ENCODE measurements at regions of chr2 and their contacts with region 1.

Region 1: DNA sequence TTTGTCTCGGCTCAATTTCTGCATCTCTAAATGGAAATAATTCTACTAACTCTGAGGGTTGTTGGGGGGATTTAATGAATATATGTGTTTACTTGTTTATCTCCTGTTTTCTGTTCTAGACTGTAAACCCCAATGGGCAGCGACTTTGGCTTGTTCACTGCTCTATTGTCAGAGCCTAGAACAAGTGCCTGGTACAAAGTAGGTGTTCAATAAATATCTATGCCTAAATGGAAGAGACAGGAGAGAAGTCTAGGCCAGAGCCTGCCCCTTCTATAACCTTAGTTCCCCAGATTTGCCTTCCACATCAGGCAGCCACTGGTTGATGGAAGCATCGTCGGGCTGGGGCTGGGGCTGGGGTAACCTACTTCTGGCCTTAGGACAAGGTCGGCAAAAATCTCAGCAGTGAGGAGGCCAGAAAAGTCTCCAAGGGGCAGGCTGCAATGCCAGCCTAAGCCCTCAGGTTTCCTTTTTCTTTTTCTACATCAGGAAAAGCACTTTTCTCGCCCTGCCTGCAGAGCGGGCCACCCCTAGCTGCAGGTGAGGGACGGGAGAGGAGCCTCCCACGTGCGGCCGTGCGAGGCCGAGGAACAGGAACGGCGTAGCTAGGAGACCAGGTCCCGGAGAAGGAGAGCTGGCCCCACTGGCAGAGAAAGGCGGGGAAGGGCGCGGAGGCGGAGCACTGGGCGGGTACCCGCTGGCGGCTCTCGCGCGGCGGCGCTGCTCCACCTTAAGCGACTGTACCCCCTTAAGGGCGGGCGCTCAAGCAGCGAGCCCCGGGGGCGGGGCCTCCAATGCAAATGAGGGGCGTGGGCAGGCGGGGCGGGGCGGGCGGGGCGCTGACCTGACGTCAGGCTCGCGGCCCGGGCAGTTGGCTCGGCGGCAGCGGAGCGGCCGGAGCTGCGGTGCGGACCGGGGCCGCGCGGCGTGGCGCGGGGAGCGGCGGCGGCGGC is at the start of gene CNNM4:
- DNase-seq: peak in 1 of 2 donors; percentile 96
- H3K4me3 ChIP-seq: peak within 1 kb of the TSS; percentile 67 to 95
- H3K27ac ChIP-seq: peak within 1 kb of the TSS; percentile 79
- H3K4me1 ChIP-seq: peaks cover 55% of the 10 kb centered on the region
- H3K27me3 ChIP-seq: no peaks in the 10 kb centered on the region
- CTCF ChIP-seq: no peak
- POLR2A ChIP-seq: peak in 1 of 2 donors; percentile 79
- total RNA-seq, gene CNNM4: 8.3 TPM

Region 2: GRCh38 chr2:96536445-96537065 is 223.8 kb before region 1 on chr2 and contains the start of gene ARID5A:
- intact Hi-C with region 1: loop called (anchors 5 kb)
- DNase-seq: no peak
- H3K4me3 ChIP-seq: peak within 1 kb of the TSS; percentile 82 to 93
- H3K27ac ChIP-seq: peak within 1 kb of the TSS; percentile 98
- H3K4me1 ChIP-seq: peaks cover 89% of the 10 kb centered on the region
- H3K27me3 ChIP-seq: no peaks in the 10 kb centered on the region
- CTCF ChIP-seq: peak in 1 of 3 experiments; percentile 63
- POLR2A ChIP-seq: peak; percentile 97 to 99
- total RNA-seq, gene ARID5A: 34.1 TPM

Region 3: GRCh38 chr2:96816128-96816835 is 56.0 kb after region 1 on chr2 and contains the start of gene CNNM3:
- intact Hi-C with region 1: loop called (anchors 5 kb)
- DNase-seq: peak in 1 of 2 donors; percentile 94
- H3K4me3 ChIP-seq: peak within 1 kb of the TSS; percentile 71 to 73
- H3K27ac ChIP-seq: peak within 1 kb of the TSS; percentile 90
- H3K4me1 ChIP-seq: peaks cover 62% of the 10 kb centered on the region
- H3K27me3 ChIP-seq: no peaks in the 10 kb centered on the region
- CTCF ChIP-seq: peak in 2 of 3 experiments; percentile 56 to 60
- POLR2A ChIP-seq: peak in 1 of 2 donors; percentile 65
- total RNA-seq, gene CNNM3: 16.5 TPM

Region 4: GRCh38 chr2:97011977-97012565 is 251.8 kb after region 1 on chr2:
- intact Hi-C with region 1: no loop called
- DNase-seq: no peak
- H3K4me3 ChIP-seq: no peak overlapping the region
- H3K27ac ChIP-seq: no peak overlapping the region
- H3K4me1 ChIP-seq: no peaks in the 10 kb centered on the region
- H3K27me3 ChIP-seq: no peaks in the 10 kb centered on the region
- CTCF ChIP-seq: peak in 2 of 3 experiments; percentile 5 to 24
- POLR2A ChIP-seq: no peak